ENCODE measurements at regions of chr17 and their contacts with region 1.

Region 1: DNA sequence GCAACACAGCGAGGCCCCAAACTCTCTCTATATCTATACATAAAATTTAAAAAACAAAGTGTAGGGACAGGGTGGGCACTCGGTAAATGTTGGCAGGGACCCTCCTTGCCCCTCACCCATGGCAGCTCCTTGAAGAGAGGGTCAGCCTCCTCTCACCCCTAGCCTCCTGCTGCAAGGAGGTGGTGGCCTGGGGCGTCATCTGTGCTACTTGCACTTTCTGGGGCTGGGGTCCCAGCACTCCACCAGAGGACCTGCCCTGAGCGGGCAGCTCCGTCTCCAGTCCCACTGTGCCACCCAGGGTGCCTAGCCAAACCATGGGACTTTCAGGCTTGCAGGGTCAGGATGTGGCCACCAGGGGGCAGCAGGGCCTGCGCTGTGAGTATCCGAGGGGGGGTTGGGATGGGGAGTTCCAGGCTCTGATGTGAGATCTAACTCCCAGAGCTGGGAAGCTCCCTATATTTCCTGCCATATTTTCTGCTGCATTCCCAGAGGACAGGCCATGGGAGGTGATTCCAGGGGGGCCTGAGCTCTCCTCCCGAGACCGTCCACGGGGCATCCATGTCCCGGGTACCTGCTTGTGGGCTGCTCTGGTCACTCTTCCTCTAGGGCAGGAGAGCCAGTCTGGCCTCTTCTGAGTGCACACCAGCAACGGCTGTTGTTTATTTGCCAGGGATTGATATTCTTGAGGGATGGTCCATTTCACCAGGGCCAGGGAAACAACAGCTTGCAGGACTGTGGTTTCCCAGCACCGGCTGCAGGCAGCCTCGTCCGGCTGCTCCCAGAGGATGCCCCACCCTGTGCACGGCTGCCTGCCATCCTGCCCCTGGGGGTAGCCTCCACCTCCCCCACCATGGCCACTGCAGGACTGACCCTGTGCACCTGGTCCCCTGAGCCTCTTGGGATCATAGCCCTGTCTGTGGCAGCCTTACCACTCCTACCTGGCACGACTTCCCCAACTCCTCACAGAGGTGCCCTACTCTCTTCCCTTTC is 1.1 kb downstream of the GPR142 start:
- DNase-seq: peak; percentile 44
- H3K4me3 ChIP-seq: no peak overlapping the region
- H3K27ac ChIP-seq: no peak overlapping the region
- H3K4me1 ChIP-seq: no peaks in the 10 kb centered on the region
- H3K27me3 ChIP-seq: no peaks in the 10 kb centered on the region
- CTCF ChIP-seq: peak; percentile 74 to 96
- POLR2A ChIP-seq: no peak

Region 2: DNA sequence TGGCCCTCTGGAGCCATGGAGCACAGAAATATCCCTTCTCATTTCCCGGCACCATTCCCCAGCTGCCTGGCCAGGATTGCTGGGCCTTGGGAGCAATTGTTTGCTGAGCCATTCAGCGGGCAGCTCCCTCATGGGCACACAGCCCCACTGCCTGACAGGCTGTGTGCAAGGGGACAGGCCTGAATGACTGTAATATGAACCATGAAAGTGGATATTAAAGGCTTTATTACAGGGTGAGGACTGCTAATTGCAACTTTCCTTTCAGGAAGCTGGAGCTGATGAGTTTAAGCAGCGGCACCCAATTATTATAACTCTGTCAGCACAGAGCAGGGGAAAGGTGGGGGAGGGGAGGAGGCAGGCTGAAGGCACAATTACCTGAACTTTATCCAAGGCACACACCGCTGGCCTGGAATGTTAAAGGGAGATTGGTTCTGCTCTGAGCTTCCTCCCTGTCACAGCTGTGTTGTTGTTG is 564.4 kb before region 1 on chr17:
- CTCF ChIA-PET with region 1: no interaction called
- POLR2A ChIA-PET with region 1: no interaction called
- dilution Hi-C with region 1: no loop called
- intact Hi-C with region 1: no loop called
- DNase-seq: no peak
- H3K4me3 ChIP-seq: no peak overlapping the region
- H3K27ac ChIP-seq: no peak overlapping the region
- H3K4me1 ChIP-seq: no peaks in the 10 kb centered on the region
- H3K27me3 ChIP-seq: no peaks in the 10 kb centered on the region
- CTCF ChIP-seq: no peak
- POLR2A ChIP-seq: no peak

Region 3: GRCh38 chr17:74305865-74306654 is 62.3 kb before region 1 on chr17:
- CTCF ChIA-PET with region 1: interaction called, 29 read pairs
- POLR2A ChIA-PET with region 1: no interaction called
- dilution Hi-C with region 1: no loop called
- intact Hi-C with region 1: no loop called
- DNase-seq: no peak
- H3K4me3 ChIP-seq: no peak overlapping the region
- H3K27ac ChIP-seq: no peak overlapping the region
- H3K4me1 ChIP-seq: no peaks in the 10 kb centered on the region
- H3K27me3 ChIP-seq: no peaks in the 10 kb centered on the region
- CTCF ChIP-seq: no peak
- POLR2A ChIP-seq: no peak

Region 4: GRCh38 chr17:74379495-74380085 is 11.2 kb after region 1 on chr17:
- CTCF ChIA-PET with region 1: interaction called, 64 read pairs
- POLR2A ChIA-PET with region 1: no interaction called
- dilution Hi-C with region 1: no loop called
- intact Hi-C with region 1: no loop called
- DNase-seq: peak; percentile 64
- H3K4me3 ChIP-seq: no peak overlapping the region
- H3K27ac ChIP-seq: no peak overlapping the region
- H3K4me1 ChIP-seq: no peaks in the 10 kb centered on the region
- H3K27me3 ChIP-seq: no peaks in the 10 kb centered on the region
- CTCF ChIP-seq: peak; percentile 75 to 92
- POLR2A ChIP-seq: no peak

Region 5: GRCh38 chr17:74437702-74438101 is 69.3 kb after region 1 on chr17:
- CTCF ChIA-PET with region 1: no interaction called
- POLR2A ChIA-PET with region 1: no interaction called
- dilution Hi-C with region 1: no loop called
- intact Hi-C with region 1: no loop called
- DNase-seq: no peak
- H3K4me3 ChIP-seq: no peak overlapping the region
- H3K27ac ChIP-seq: no peak overlapping the region
- H3K4me1 ChIP-seq: no peaks in the 10 kb centered on the region
- H3K27me3 ChIP-seq: peaks cover 2 to 5% of the 10 kb centered on the region in 2 experiments
- CTCF ChIP-seq: peak; percentile 45 to 53
- POLR2A ChIP-seq: no peak

Region 6: DNA sequence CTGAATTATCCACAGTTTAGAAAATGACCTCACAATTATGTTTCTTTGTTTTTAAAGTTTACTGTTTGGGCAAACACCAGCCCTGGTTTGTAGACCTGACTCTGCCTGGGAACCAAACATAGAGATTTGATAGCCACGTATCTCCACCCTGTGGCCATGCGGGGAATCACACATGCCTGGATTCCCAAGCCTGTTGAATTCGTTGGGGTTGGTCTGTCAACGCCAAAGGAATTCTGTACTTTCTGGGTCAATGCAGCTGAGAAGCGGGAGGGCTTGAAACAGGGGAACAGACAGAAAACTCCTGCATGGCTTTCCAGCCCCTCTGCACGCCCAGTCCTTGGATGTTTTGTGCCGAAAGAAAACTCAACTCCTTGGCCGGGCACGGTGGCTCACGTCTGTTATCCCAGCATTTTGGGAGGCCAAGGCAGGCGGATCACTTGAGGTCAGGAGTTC is 125.0 kb after region 1 on chr17:
- CTCF ChIA-PET with region 1: interaction called, 16 read pairs
- POLR2A ChIA-PET with region 1: no interaction called
- dilution Hi-C with region 1: no loop called
- intact Hi-C with region 1: loop called (anchors 1 kb)
- DNase-seq: peak; percentile 38
- H3K4me3 ChIP-seq: no peak overlapping the region
- H3K27ac ChIP-seq: no peak overlapping the region
- H3K4me1 ChIP-seq: no peaks in the 10 kb centered on the region
- H3K27me3 ChIP-seq: no peaks in the 10 kb centered on the region
- CTCF ChIP-seq: peak; percentile 72 to 73
- POLR2A ChIP-seq: no peak

Region 7: GRCh38 chr17:74712756-74713155 is 344.4 kb after region 1 on chr17 and contains the start of gene CD300LF:
- CTCF ChIA-PET with region 1: no interaction called
- POLR2A ChIA-PET with region 1: no interaction called
- dilution Hi-C with region 1: no loop called
- intact Hi-C with region 1: no loop called
- DNase-seq: no peak
- H3K4me3 ChIP-seq: no peak within 1 kb of the TSS
- H3K27ac ChIP-seq: no peak within 1 kb of the TSS
- H3K4me1 ChIP-seq: no peaks in the 10 kb centered on the region
- H3K27me3 ChIP-seq: no peaks in the 10 kb centered on the region
- CTCF ChIP-seq: no peak
- POLR2A ChIP-seq: no peak
- total RNA-seq, gene CD300LF: not detected in 2 replicates

Measured in endothelial cell of umbilical vein (primary cell).